ENCODE measurements at regions of chr17 and their contacts with region 1.

Region 1: DNA sequence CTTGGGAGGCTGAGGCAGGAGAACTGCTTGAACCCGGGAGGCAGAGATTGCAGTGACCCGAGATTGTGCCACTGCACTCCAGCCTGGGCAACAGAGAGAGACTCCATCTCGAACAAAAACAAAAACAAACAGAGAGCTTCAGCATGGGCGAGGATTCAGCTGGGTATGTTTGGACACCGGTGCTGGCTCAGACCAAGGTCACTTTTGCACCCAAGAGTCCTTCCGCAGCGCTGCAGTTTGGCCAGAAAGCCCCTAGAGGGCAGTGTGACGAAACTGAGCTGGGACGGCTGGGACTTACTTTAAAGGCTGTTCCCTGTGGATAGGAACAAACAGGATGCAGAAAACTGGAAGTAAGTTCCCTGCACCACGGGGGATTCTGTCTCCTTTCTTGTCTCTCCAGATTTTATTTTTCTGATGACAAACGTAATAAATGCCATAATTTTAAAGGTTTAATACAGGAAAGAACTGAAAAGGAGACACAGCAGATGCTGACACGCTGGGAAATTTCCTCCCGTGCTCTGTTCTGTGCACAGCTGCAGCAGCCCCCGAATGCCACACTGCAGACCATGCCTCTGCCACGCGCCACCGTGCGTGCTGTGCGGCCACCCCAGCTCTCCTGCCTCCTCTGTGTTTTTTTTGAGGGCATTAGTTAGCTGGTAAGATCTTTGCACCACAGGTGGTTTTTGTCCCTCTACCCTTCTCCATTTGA is 25.2 kb upstream of the USP36 start:
- DNase-seq: peak; percentile 40 to 60 (median 51)
- H3K4me3 ChIP-seq: no peak overlapping the region
- H3K27ac ChIP-seq: no peak overlapping the region
- H3K4me1 ChIP-seq: peaks cover 0 to 3% (median 0%) of the 10 kb centered on the region in 4 experiments
- H3K27me3 ChIP-seq: no peaks in the 10 kb centered on the region

Region 2: DNA sequence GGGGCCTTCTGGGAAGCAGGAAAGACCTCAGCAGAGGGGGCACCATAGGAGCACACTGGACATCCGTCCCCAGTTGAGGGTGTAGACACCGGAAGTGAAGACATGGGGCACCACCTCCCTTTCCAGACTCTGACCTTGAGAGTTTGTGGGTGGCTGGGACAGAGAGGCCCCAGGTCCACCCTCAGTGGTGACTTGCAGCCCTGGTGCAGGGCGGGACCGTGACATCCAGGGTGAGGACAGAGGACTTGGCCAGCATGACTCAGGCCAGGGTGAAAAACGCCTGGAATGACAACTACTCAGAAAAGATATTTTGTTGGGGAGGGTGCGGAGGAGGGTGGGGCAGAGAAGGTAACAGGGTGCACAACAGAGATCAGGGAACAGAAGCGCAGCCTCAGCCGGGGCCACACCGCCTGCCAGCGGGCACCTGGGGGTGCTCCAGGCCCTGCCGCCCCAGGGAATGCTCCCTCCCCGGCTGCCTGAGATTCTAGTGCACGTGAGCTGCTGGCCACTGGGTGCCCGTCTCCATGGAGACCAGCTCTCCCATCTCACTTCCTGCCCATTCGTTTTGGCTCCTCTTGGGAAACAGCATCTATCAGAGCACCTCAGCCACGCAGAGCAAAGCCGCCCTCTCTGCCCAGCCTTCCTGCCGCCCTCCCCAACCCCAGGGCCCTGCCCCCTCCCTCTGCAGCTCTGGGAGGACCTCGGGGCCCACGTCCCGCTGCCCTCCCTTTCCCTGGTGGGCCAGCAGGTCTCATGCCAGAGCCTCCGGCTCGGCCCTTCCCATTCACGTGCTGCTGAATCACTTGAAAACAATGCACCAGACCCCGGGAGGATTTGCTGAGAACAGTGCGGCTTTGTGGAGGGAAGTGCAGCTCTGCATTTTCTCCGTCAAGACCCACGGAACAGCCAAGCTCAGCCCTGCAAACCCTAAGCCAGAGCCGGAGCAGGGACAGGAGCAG is 17.6 kb after region 1 on chr17:
- CTCF ChIA-PET with region 1: interaction called, 12 read pairs
- POLR2A ChIA-PET with region 1: no interaction called
- DNase-seq: peak; percentile 67 to 84 (median 77)
- H3K4me3 ChIP-seq: peak overlapping the region in 4 of 7 experiments; percentile 26 to 57 (median 52)
- H3K27ac ChIP-seq: peak overlapping the region; percentile 68 to 77
- H3K4me1 ChIP-seq: peaks cover 7 to 79% (median 62%) of the 10 kb centered on the region in 4 experiments
- H3K27me3 ChIP-seq: no peaks in the 10 kb centered on the region

Region 3: GRCh38 chr17:78970834-78971773 is 105.3 kb after region 1 on chr17:
- CTCF ChIA-PET with region 1: interaction called, 26 read pairs
- POLR2A ChIA-PET with region 1: interaction called, 4 read pairs
- DNase-seq: peak; percentile 79 to 88 (median 83)
- H3K4me3 ChIP-seq: no peak overlapping the region
- H3K27ac ChIP-seq: no peak overlapping the region
- H3K4me1 ChIP-seq: peaks cover 0 to 9% (median 5%) of the 10 kb centered on the region in 4 experiments
- H3K27me3 ChIP-seq: no peaks in the 10 kb centered on the region

Measured in common myeloid progenitor, CD34-positive (primary cell).